Posterior vena cava (tissue), 2 donors: ENCODE measurements at regions of chr9 and their contacts with region 1.

Region 1: GRCh38 chr9:34158362-34158869 is 20.4 kb upstream of the UBAP1 start:
- DNase-seq: no peak

Region 2: GRCh38 chr9:33076358-33077004 is 1081.9 kb before region 1 on chr9 and contains the start of gene SMU1:
- intact Hi-C with region 1: no loop called
- DNase-seq: peak; percentile 99
- total RNA-seq, gene SMU1: 15.8 to 16.8 TPM

Region 3: DNA sequence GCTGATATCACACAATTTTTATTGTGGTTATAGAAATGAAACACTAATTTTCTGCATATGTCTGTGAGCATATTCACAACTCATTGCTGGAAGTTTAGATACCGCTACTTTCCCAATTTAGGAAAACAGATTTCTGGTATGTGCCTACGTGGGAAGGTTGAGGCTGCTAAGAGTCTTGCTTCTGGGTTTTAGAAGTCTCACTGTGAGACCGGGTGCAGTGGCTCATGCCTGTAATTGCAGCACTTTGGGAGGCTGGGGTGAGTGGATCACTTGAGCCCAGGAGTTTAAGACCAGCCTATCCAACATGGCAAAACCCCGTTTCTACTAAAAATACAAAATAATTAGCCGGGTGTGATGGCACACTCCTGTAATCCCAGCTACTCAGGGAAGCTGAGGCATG is 60.0 kb after region 1 on chr9:
- intact Hi-C with region 1: loop called in 1 of 2 experiments (anchors 2 kb)
- DNase-seq: no peak

Region 4: GRCh38 chr9:34628656-34629491 is 470.5 kb after region 1 on chr9 and contains the start of gene ARID3C:
- intact Hi-C with region 1: no loop called
- DNase-seq: no peak
- total RNA-seq, gene ARID3C: not detected